Activated T-helper 1 cell treated with anti-CD3 and anti-CD28 coated beads, Interleukin-12 subunit alpha, Interleukin-12 subunit beta, Interleukin-2, Interleukin-4 antibody, amounts not matched to agents 30 ng/mL and 10 ng/mL and 1 ng/mL, durations not matched to agents 14 hours and 24 hours and 36 hours (primary cell): ENCODE measurements at regions of chr3 and their contacts with region 1.

Region 1: DNA sequence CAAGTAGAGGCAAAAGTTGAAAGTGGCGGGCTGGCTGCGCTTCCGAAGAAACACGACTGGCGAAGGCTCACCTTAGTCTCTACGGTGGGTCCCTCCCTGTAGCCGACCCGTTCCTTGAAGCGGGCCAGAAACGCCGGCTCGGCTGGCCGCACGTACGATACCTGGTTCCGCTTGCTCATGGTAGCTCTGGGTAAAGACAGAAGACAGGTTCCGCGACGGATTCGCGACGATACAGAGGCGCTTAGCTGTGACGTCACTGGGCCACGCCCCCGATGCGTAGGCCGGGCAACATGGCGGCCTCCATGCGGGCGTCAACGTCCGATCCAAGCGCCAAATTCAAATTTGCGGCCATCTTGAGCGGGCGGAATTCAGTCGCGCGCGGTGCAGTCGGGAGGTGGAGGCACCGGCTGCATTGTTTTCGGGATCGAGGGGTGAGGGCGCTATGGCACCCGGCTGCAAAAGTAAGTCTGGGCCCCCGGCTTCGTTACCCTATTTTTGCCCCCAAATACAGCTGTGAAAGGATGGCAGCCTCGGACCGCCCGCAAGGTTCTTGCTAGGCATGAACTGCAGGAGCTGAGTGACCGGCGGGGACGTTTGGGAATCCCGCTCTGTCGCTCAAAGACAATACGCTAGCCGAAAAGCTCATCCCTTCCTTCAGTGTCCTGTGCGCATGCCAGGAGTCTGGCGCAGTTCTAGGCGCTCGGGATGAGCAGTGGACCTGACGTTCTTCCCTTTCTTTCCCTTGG is at the starts of genes KIAA1143 and KIF15:
- DNase-seq: peak; percentile 95
- H3K4me3 Mint-ChIP-seq: peak within 1 kb of the TSS; percentile 93
- H3K27ac Mint-ChIP-seq: peak within 1 kb of the TSS; percentile 90
- H3K4me1 Mint-ChIP-seq: peaks cover 38% of the 10 kb centered on the region
- H3K27me3 Mint-ChIP-seq: peaks cover 4% of the 10 kb centered on the region
- total RNA-seq, gene KIAA1143: 39.2 and 40.4 TPM in 2 replicates
- total RNA-seq, gene KIF15: 23.2 and 25.5 TPM in 2 replicates

Region 2: GRCh38 chr3:44323341-44323955 is 438.1 kb before region 1 on chr3:
- intact Hi-C with region 1: loop called (anchors 5 kb)
- DNase-seq: peak; percentile 22
- H3K4me3 Mint-ChIP-seq: no peak overlapping the region
- H3K27ac Mint-ChIP-seq: no peak overlapping the region
- H3K4me1 Mint-ChIP-seq: no peaks in the 10 kb centered on the region
- H3K27me3 Mint-ChIP-seq: peaks cover 23% of the 10 kb centered on the region

Region 3: GRCh38 chr3:44439499-44440295 is 321.9 kb before region 1 on chr3:
- intact Hi-C with region 1: loop called (anchors 1 kb)
- DNase-seq: peak; percentile 69
- H3K4me3 Mint-ChIP-seq: peak overlapping the region; percentile 65
- H3K27ac Mint-ChIP-seq: peak overlapping the region; percentile 84
- H3K4me1 Mint-ChIP-seq: peaks cover 46% of the 10 kb centered on the region
- H3K27me3 Mint-ChIP-seq: no peaks in the 10 kb centered on the region

Region 4: GRCh38 chr3:44529927-44530326 is 231.7 kb before region 1 on chr3:
- intact Hi-C with region 1: loop called (anchors 2 kb)
- DNase-seq: no peak
- H3K4me3 Mint-ChIP-seq: no peak overlapping the region
- H3K27ac Mint-ChIP-seq: no peak overlapping the region
- H3K4me1 Mint-ChIP-seq: peaks cover 4% of the 10 kb centered on the region
- H3K27me3 Mint-ChIP-seq: peaks cover 10% of the 10 kb centered on the region

Region 5: DNA sequence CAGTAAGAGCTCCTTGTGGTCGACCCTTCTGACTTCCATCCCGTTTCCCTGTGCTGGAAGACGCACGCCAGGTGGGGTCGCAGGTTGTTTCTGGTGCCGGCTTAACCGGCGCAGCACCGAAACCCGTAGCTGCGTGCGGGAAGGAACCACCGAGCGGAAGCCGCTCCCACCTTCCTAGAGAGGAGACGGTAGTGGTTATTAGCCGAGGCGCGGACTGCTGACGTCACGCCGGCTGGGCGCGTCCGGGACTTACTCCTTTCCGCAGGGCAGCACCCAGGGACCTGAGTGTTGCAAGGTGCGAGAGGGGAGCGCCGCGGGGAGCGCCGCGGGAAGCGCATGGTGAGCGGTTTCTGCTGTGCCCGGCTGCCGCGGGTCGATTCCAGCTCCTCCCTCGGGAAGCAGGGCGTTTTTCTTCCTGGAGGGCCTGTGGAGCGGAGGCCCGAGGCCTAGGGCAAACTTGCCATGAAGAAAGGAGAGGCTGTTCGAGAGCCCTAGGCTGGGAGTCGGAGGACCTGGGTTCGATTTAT is 32.1 kb before region 1 on chr3 and contains the start of gene ZNF501:
- intact Hi-C with region 1: loop called (anchors 1 kb)
- DNase-seq: peak; percentile 71
- H3K4me3 Mint-ChIP-seq: peak within 1 kb of the TSS; percentile 93
- H3K27ac Mint-ChIP-seq: peak within 1 kb of the TSS; percentile 65
- H3K4me1 Mint-ChIP-seq: peaks cover 15% of the 10 kb centered on the region
- H3K27me3 Mint-ChIP-seq: no peaks in the 10 kb centered on the region
- total RNA-seq, gene ZNF501: 1.5 and 1.6 TPM in 2 replicates

Region 6: GRCh38 chr3:44870381-44871078 is 108.9 kb after region 1 on chr3:
- intact Hi-C with region 1: no loop called
- DNase-seq: no peak
- H3K4me3 Mint-ChIP-seq: no peak overlapping the region
- H3K27ac Mint-ChIP-seq: no peak overlapping the region
- H3K4me1 Mint-ChIP-seq: peaks cover 19% of the 10 kb centered on the region
- H3K27me3 Mint-ChIP-seq: no peaks in the 10 kb centered on the region

Region 7: GRCh38 chr3:44976002-44976815 is 214.6 kb after region 1 on chr3 and contains the starts of genes EXOSC7 and ZDHHC3:
- intact Hi-C with region 1: loop called (anchors 1 kb)
- DNase-seq: peak; percentile 81
- H3K4me3 Mint-ChIP-seq: peak within 1 kb of the TSS; percentile 99
- H3K27ac Mint-ChIP-seq: peak within 1 kb of the TSS; percentile 96
- H3K4me1 Mint-ChIP-seq: peaks cover 58% of the 10 kb centered on the region
- H3K27me3 Mint-ChIP-seq: no peaks in the 10 kb centered on the region
- total RNA-seq, gene EXOSC7: 93.6 and 94.4 TPM in 2 replicates
- total RNA-seq, gene ZDHHC3: 46.6 and 47.5 TPM in 2 replicates